SK-N-SH (cell line): ENCODE measurements at regions of chr2 and their contacts with region 1.

Region 1: DNA sequence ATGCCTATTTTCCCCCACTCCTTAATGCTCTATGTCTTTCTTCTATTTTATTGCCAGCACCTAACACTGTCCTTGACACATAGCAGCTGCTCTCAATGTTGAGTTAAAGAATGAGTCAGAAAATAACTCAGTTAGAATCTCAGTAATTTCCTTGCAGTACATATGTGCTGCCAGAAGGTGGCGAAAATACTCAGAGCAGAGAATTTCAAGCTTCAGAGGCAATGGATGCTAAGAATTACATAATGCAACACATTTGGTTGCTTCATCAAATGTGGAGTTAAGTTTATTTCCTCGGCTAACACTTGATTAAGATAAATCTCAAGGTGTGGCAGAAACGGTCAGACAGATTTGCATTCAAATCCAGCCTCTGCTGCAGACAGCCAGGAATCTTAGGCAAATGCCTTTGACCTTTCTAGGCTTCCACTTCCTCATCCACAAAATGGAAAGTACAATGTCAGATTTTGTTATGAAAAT is 105.6 kb downstream of the VSNL1 start:
- DNase-seq: peak; percentile 64
- H3K4me3 ChIP-seq: no peak overlapping the region; a peak in 1 of 4 replicates
- H3K27ac ChIP-seq: peak overlapping the region in 1 of 2 experiments; percentile 25; a peak in 1 of 4 replicates
- H3K4me1 ChIP-seq: peaks cover 0 to 30% of the 10 kb centered on the region in 2 experiments; a peak in 2 of 4 replicates
- H3K27me3 ChIP-seq: no peaks in the 10 kb centered on the region
- CTCF ChIP-seq: peak; percentile 96
- EP300 ChIP-seq: no peak
- RAD21 ChIP-seq: peak; percentile 78

Region 2: GRCh38 chr2:17538844-17539554 is 107.1 kb before region 1 on chr2:
- CTCF ChIA-PET with region 1: interaction called, 15 read pairs
- POLR2A ChIA-PET with region 1: no interaction called
- DNase-seq: peak; percentile 87
- H3K4me3 ChIP-seq: peak overlapping the region; percentile 62 to 74
- H3K27ac ChIP-seq: peak overlapping the region; percentile 22 to 47; a peak in 3 of 4 replicates
- H3K4me1 ChIP-seq: peaks cover 0 to 25% of the 10 kb centered on the region in 2 experiments; a peak in 2 of 4 replicates
- H3K27me3 ChIP-seq: peaks cover 19% of the 10 kb centered on the region; the same call in 1 of the 2 replicates
- CTCF ChIP-seq: no peak
- EP300 ChIP-seq: no peak; a peak in 1 of 4 replicates
- RAD21 ChIP-seq: no peak

Region 3: GRCh38 chr2:17557596-17557995 is 88.5 kb before region 1 on chr2:
- CTCF ChIA-PET with region 1: interaction called, 16 read pairs
- POLR2A ChIA-PET with region 1: no interaction called
- DNase-seq: no peak
- H3K4me3 ChIP-seq: no peak overlapping the region
- H3K27ac ChIP-seq: no peak overlapping the region
- H3K4me1 ChIP-seq: no peaks in the 10 kb centered on the region
- H3K27me3 ChIP-seq: no peaks in the 10 kb centered on the region
- CTCF ChIP-seq: no peak
- EP300 ChIP-seq: no peak
- RAD21 ChIP-seq: no peak

Region 4: DNA sequence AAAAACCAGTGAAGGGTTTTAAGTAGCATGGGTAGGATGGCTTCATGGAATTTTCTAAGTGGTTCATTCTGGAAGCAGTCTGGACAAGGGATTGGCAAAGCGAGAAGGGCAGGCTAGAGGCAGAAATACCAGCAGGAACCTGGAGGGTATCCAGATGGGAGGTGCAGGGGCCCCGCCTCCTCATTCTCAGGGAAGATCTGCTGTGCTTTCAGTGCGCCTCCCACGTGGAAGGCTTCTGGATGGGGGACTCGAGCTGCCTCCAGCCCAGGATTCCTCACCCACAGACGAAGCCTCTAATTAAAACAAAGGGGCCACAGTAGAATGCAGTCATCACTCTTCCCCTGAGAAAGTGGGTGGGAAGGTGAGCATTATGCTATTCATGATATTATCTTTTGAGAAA is 25.8 kb before region 1 on chr2:
- CTCF ChIA-PET with region 1: interaction called, 21 read pairs
- POLR2A ChIA-PET with region 1: no interaction called
- DNase-seq: no peak
- H3K4me3 ChIP-seq: no peak overlapping the region
- H3K27ac ChIP-seq: peak overlapping the region in 1 of 2 experiments; percentile 77; a peak in 2 of 4 replicates
- H3K4me1 ChIP-seq: peaks cover 3 to 40% of the 10 kb centered on the region in 2 experiments; a peak in 3 of 4 replicates
- H3K27me3 ChIP-seq: no peaks in the 10 kb centered on the region
- CTCF ChIP-seq: no peak
- EP300 ChIP-seq: no peak
- RAD21 ChIP-seq: no peak

Region 5: GRCh38 chr2:17628349-17629261 is 17.5 kb before region 1 on chr2:
- CTCF ChIA-PET with region 1: interaction called, 60 read pairs
- POLR2A ChIA-PET with region 1: no interaction called
- DNase-seq: no peak
- H3K4me3 ChIP-seq: no peak overlapping the region
- H3K27ac ChIP-seq: no peak overlapping the region
- H3K4me1 ChIP-seq: no peaks in the 10 kb centered on the region
- H3K27me3 ChIP-seq: no peaks in the 10 kb centered on the region
- CTCF ChIP-seq: no peak
- EP300 ChIP-seq: no peak
- RAD21 ChIP-seq: no peak

Region 6: DNA sequence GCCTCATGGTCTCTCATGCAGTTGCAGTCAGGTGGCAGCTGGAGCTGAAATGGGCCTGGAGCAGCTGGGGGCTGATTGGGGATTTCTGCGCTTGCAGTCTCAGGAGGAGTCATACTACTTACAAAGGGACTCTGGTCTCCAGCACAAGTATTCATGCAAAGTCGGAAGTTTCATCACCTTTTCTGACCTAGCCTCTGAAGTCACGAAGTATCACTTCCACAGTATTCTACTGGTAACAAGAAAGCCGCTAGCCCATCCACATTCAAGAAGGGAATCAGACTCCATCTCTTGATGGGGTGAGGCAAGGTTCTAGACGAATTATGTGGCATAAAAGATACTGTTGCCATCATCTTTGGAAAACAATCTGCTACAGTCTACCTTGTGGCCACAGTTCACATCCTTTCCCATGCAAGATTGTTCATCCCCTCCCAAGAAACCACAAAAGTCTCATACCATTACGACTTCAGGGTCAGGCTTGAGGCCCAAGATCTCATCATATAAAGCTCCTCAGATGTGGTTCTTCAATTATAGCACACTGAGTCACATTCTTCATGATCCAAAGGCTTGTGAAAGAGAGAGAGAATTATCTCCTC is 12.2 kb after region 1 on chr2:
- CTCF ChIA-PET with region 1: interaction called, 471 read pairs
- POLR2A ChIA-PET with region 1: no interaction called
- DNase-seq: no peak
- H3K4me3 ChIP-seq: no peak overlapping the region
- H3K27ac ChIP-seq: no peak overlapping the region
- H3K4me1 ChIP-seq: no peaks in the 10 kb centered on the region
- H3K27me3 ChIP-seq: no peaks in the 10 kb centered on the region
- CTCF ChIP-seq: no peak
- EP300 ChIP-seq: no peak
- RAD21 ChIP-seq: no peak